Mammary epithelial cell (primary cell): ENCODE measurements at regions of chr2 and their contacts with region 1.

Region 1: GRCh38 chr2:114628481-114628880 is 186.0 kb downstream of the DPP10 start:
- DNase-seq: no peak
- H3K4me3 ChIP-seq: no peak overlapping the region
- H3K27ac ChIP-seq: no peak overlapping the region
- H3K4me1 ChIP-seq: no peaks in the 10 kb centered on the region
- H3K27me3 ChIP-seq: no peaks in the 10 kb centered on the region
- CTCF ChIP-seq: no peak

Region 2: DNA sequence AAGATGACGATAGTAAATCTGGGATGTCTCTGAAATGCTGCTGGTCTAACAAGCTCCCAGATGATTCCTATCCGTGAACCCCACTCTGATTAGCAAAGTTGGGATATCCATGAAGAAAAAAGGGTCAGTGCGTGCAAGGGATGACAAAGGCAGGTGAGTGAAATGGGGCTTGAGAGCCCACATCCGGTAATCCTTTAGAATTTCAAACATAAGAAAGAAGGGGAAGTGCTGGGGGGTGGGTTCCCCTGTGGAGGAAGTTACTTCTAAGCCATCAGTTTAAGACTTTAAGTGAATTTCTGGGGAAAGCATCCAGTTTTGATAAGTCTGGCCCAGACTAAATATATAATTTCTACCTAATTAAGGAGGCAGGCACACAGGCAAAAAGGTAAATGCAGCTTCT is 23.5 kb after region 1 on chr2:
- CTCF ChIA-PET with region 1: no interaction called
- dilution Hi-C with region 1: no loop called
- in situ Hi-C with region 1: no loop called
- intact Hi-C with region 1: loop called (anchors 2 kb)
- DNase-seq: no peak
- H3K4me3 ChIP-seq: no peak overlapping the region
- H3K27ac ChIP-seq: no peak overlapping the region
- H3K4me1 ChIP-seq: no peaks in the 10 kb centered on the region
- H3K27me3 ChIP-seq: no peaks in the 10 kb centered on the region
- CTCF ChIP-seq: no peak